AG04450 (cell line): ENCODE measurements at regions of chr15 and their contacts with region 1.

Region 1: GRCh38 chr15:41557673-41558399 is 1.2 kb upstream of the TYRO3 start:
- DNase-seq: peak; percentile 39
- H3K4me3 ChIP-seq: peak overlapping the region; percentile 67
- H3K27ac ChIP-seq: no peak overlapping the region
- H3K27me3 ChIP-seq: no peaks in the 10 kb centered on the region
- CTCF ChIP-seq: peak; percentile 91

Region 2: DNA sequence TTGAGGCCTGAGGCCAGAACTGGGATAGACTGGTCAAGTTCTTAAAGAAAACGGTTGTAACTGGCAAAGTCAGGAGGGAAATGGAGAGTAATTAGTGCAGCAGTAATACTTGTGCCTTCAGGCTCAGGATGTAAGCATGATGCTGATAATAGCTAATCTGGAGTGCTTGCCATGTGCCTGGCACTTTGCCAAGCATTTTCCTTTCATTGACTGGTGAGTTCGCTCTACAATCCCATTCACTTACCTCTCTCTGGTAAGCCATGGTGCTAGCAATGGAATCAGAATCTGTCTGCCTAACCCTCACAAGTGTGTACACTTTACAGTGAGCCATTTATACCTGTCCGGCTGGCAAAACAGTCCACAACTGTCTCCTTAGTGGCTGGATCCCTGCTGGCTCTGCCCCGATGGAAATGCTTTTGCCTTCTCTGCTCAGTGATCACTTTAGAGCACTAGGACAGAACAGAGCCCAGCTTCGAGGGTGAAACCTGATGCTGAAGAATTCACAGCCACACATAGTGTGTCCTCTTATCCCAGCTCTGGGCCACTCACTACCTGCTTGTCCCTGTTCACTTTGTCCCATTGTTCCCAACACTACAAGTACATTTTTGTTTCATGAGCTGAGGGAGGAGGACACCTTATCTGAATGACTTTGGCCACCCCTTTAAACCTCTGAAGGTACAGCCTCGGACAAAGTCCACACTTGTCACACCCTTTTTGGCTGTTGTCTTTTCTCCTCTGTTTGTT is 316.4 kb before region 1 on chr15:
- CTCF ChIA-PET with region 1: no interaction called
- POLR2A ChIA-PET with region 1: no interaction called
- DNase-seq: no peak
- H3K4me3 ChIP-seq: no peak overlapping the region
- H3K27ac ChIP-seq: no peak overlapping the region
- H3K27me3 ChIP-seq: no peaks in the 10 kb centered on the region
- CTCF ChIP-seq: no peak

Region 3: GRCh38 chr15:41476416-41477048 is 81.3 kb before region 1 on chr15:
- CTCF ChIA-PET with region 1: no interaction called
- POLR2A ChIA-PET with region 1: no interaction called
- DNase-seq: no peak
- H3K4me3 ChIP-seq: no peak overlapping the region
- H3K27ac ChIP-seq: peak overlapping the region; percentile 89
- H3K27me3 ChIP-seq: no peaks in the 10 kb centered on the region
- CTCF ChIP-seq: no peak

Region 4: DNA sequence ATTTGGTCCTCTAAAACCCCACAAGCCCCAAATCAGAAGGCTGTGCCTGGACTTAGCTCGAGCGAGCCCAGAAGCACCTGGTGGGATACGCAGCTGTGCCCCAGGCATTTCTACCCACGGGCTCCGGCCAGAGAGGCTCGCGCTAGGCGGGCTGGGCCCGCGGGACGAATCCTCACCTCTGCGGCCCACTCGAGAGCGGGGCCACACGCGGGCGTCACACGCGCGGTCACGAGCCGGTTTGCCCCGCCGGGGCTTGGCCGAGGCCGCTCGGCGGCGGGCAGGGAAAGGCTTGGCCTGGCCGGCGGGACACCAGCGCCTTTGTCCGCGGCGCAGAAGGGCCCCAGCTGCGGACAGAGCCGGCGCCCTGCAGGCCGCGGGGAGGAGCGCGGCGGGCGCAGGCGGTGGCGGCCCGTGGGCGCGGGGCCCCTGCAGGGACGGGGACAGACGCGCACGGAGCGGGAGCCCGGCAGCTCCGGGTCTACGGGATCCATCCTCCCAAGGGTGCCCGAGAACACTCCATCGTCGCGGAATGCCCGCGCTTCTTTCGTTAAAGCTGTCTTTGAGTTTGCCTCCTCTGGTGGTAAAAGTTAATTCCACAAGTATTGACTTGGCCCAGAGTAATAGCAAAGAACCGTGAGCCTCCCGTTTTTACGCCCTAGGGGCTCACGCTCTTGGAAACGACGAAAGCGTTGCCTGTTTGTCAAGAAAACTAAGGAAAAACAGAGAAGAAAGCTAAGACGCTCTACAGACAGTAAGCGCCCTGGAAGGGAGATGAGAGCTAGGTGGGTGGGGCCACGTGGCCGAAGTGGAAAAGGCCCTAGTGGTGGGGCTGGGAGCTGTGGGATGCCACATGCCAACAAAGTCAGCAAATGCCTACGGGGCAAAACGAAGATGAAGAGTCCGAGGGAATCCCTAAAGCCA is 27.6 kb after region 1 on chr15:
- CTCF ChIA-PET with region 1: interaction called, 14 read pairs
- POLR2A ChIA-PET with region 1: no interaction called
- DNase-seq: no peak
- H3K4me3 ChIP-seq: peak overlapping the region; percentile 46
- H3K27ac ChIP-seq: peak overlapping the region; percentile 52
- H3K27me3 ChIP-seq: no peaks in the 10 kb centered on the region
- CTCF ChIP-seq: peak; percentile 60

Region 5: GRCh38 chr15:41603941-41604911 is 46.4 kb after region 1 on chr15:
- CTCF ChIA-PET with region 1: interaction called, 15 read pairs
- POLR2A ChIA-PET with region 1: no interaction called
- DNase-seq: no peak
- H3K4me3 ChIP-seq: peak overlapping the region; percentile 52
- H3K27ac ChIP-seq: peak overlapping the region; percentile 78
- H3K27me3 ChIP-seq: no peaks in the 10 kb centered on the region
- CTCF ChIP-seq: peak; percentile 90

Region 6: GRCh38 chr15:41671656-41672648 is 114.1 kb after region 1 on chr15:
- CTCF ChIA-PET with region 1: no interaction called
- POLR2A ChIA-PET with region 1: no interaction called
- DNase-seq: no peak
- H3K4me3 ChIP-seq: no peak overlapping the region
- H3K27ac ChIP-seq: no peak overlapping the region
- H3K27me3 ChIP-seq: no peaks in the 10 kb centered on the region
- CTCF ChIP-seq: no peak